ENCODE measurements at regions of chr3 and their contacts with region 1.

Region 1: DNA sequence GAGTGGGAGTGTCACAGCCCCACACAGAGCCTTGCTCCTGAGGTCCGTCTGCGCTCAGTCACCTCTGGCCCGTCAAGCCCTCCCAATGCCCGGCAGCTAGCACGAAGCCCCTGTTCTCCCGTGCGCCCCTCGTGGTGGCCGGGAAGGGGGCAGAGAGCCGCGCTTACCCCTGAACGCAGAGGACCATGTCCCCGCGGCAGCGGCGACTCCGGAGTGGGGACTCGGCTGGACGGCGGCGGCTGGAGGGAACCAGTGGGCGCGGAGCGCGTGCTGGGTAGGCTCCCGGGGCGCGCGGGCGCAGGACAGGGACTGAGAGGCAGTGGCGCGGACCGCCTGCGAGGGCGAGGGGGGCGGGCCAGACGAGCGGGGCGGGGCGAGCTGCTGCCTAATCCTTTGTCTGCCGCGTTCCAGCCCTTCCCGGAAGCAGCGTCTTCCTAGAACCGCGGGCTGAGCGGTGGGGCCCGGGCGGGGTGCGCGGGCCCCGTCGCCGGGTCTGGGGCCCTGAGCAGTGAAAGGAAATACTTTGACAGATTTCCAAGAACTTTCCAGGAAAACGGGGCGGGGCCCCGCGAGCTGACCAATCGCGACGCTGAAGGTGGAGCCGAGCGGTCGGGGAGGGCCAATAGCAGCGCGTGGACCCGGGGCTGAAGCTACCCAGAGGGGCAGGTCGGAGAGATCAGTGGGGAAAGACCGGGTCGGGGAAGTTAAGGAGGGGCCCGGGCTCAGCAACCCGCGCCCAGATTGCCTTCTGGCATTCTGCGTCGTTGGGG is at the start of gene CISH:
- DNase-seq: peak; percentile 80 to 97
- H3K4me3 ChIP-seq: peak within 1 kb of the TSS; percentile 74 to 76
- H3K27ac ChIP-seq: peak within 1 kb of the TSS; percentile 70 to 79
- H3K4me1 ChIP-seq: peaks cover 3 to 18% of the 10 kb centered on the region in 2 donors
- H3K27me3 ChIP-seq: no peaks in the 10 kb centered on the region
- CTCF ChIP-seq: peak in 2 of 3 experiments; percentile 35 to 39
- total RNA-seq, gene CISH: 6.1 TPM

Region 2: DNA sequence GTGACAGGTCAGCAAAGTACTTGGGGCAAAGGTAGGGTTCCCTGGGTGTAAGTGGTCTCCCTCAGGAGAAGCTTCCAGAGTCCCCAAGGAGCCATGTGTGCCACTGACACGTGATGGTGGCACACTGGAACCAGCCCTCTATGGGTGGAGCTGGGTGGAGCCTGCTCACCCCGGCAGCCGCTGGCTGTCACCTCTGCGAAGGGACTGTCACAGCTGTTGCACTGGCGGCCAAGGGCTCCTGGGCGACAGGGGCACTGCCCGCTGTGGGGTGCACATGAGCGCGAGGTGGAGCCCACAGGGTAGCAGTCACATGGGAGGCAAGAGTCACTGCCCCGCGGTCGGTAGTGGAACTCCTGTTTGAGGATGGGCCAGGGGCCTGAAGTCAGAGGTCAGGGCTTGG is 1960.9 kb before region 1 on chr3:
- intact Hi-C with region 1: no loop called
- DNase-seq: no peak
- H3K4me3 ChIP-seq: no peak overlapping the region
- H3K27ac ChIP-seq: no peak overlapping the region
- H3K4me1 ChIP-seq: peaks cover 4 to 5% of the 10 kb centered on the region in 2 donors
- H3K27me3 ChIP-seq: no peaks in the 10 kb centered on the region
- CTCF ChIP-seq: no peak

Region 3: DNA sequence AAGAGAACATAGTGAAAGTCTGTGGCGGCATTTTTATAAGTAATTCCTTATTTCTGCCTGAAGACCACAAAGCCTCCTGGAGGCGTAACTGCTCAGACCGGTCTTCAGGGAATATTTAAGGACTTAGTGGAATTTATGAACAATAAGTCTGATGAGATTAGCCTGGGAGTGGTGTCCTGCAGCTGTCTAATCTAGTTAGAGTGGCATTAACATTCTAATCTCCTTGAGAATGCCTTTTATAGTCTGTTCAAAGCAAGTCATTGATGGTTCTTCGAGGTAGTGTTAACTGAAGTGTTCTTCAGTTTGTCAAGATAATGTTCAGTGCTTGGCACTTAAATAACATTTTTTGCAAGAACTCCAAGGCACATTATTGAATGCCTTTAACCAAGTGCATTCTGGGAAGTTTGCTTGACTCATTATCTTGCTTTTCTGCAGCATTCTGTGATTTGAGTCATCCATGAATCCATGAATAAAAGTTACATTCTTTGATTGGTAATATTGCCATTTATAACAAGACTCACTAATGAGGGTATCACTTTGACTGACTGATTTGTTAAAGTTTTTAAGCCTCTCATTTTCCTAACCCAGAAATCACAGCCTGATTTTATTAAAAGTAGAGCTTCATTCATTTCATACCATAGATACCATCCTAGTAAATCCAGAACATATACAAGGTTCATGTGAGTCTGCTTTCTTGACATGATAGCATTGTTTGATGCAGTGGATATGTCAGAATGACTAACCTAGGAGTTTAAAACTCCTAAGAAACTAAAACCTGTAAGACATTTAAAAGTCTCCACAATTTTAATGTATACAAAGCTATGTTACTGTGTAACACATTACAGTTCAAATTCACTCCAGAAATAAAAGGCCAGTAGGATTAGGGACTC is 510.4 kb before region 1 on chr3:
- intact Hi-C with region 1: no loop called
- DNase-seq: no peak
- H3K4me3 ChIP-seq: no peak overlapping the region
- H3K27ac ChIP-seq: no peak overlapping the region
- H3K4me1 ChIP-seq: no peaks in the 10 kb centered on the region
- H3K27me3 ChIP-seq: no peaks in the 10 kb centered on the region
- CTCF ChIP-seq: no peak

Region 4: DNA sequence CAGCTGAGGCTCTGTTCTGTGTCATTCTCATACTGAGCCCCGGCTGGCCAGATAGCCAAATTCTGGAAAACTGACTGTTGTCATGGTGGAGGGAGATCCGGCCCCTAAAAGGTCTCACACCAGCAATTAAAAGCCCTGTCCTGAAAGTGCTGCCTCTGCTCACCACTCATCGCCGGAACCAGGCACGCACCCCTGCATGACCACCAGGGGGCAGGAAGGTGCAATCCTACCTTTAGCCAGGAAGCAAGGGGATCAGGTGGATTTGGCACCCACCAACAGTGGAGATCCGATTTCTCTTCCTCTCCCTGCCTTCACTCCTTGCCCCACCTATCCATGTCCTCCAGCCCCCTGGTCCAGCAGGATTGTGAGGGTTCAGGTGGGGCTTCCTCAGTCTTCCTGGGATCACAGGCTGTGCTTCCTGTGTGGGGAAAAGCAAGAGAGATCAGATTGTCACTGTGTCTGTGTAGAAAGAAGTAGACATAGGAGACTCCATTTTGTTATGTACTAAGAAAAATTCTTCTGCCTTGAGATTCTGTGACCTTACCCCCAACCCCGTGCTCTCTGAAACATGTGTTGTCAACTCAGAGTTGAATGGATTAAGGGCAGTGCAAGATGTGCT is 92.1 kb before region 1 on chr3:
- intact Hi-C with region 1: loop called (anchors 10 kb)
- DNase-seq: no peak
- H3K4me3 ChIP-seq: no peak overlapping the region
- H3K27ac ChIP-seq: no peak overlapping the region
- H3K4me1 ChIP-seq: peaks cover 0 to 8% of the 10 kb centered on the region in 2 donors
- H3K27me3 ChIP-seq: no peaks in the 10 kb centered on the region
- CTCF ChIP-seq: peak; percentile 47 to 84 (median 70)

Region 5: DNA sequence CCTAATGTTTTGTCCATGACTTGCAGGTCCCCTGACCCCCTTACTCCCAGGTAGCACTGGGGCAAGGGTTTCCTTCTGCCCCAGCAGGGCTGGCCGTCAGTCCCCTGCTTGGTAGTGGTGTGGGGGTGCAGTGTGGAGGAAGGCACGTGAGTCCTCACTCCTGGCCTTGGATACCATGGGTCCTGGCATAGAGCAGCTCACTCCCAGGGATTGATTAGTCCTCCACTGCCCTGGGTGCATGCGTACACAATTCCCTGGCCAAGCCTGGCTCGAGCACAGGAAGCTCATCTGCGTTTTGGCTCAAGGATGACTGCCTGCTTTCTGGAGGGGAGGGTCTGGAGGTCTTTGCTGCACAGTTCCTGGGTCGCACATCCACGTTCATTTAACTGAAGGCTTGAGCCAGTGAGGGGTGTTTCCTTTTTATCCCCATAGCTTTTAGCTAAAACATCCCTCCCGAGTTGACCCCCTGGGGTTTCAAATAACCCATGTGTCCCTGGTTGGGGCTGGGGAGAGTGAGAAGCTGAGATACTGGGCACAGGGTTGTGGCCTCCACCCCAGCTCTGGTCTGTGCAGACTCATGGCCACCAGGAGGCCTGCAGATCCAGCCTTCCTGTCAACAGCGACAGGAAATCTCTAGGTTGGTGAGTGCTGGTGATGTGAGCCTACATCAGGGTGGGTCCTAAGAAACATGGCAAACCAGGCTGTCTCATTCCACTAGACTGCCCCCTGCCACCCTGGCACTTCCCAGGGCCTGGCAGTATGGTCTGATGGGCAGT is 30.8 kb before region 1 on chr3:
- intact Hi-C with region 1: no loop called
- DNase-seq: no peak
- H3K4me3 ChIP-seq: no peak overlapping the region
- H3K27ac ChIP-seq: peak overlapping the region in 1 of 2 donors; percentile 51
- H3K4me1 ChIP-seq: peaks cover 0 to 10% of the 10 kb centered on the region in 2 donors
- H3K27me3 ChIP-seq: no peaks in the 10 kb centered on the region
- CTCF ChIP-seq: no peak

Region 6: DNA sequence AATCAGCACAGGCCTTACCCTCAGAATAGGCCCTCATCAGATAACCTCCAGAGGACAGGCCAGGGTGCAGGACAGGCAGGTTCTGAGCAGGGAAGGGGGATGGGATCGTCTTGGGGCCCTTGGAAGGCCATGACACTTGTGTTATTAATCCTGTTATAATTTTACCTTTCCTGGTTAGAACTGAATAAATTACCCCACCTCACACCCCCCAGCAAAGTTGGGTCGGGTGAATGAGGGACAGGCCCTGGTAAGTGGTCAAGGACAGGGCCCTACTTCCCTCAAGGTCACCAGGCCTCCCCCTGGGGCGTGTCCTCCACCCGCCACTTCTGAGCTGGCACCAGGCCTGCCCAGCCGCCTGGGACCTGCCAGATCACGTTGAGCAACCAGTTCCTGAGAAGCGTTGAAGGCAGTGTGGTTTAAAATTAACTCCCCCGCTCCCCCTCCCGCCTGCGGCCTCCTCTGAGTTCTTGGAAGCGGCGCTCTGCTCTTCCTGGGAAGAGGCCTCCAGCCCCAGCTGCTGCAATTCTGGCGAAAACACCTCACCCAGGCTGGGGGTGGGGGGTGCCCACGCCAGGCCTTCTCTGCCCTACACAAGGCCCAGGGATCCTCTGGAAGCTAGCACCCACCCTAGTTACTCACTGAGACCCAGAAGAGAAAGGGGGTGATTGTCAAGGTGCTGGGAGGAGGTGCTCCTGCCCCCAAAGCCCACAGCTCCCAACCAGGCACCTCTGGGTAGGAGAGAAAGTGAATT is 10.6 kb before region 1 on chr3:
- intact Hi-C with region 1: loop called (anchors 1 kb)
- DNase-seq: peak; percentile 88 to 98
- H3K4me3 ChIP-seq: peak overlapping the region; percentile 21 to 46
- H3K27ac ChIP-seq: peak overlapping the region; percentile 94 to 98
- H3K4me1 ChIP-seq: peaks cover 20 to 29% of the 10 kb centered on the region in 2 donors
- H3K27me3 ChIP-seq: no peaks in the 10 kb centered on the region
- CTCF ChIP-seq: no peak

Region 7: DNA sequence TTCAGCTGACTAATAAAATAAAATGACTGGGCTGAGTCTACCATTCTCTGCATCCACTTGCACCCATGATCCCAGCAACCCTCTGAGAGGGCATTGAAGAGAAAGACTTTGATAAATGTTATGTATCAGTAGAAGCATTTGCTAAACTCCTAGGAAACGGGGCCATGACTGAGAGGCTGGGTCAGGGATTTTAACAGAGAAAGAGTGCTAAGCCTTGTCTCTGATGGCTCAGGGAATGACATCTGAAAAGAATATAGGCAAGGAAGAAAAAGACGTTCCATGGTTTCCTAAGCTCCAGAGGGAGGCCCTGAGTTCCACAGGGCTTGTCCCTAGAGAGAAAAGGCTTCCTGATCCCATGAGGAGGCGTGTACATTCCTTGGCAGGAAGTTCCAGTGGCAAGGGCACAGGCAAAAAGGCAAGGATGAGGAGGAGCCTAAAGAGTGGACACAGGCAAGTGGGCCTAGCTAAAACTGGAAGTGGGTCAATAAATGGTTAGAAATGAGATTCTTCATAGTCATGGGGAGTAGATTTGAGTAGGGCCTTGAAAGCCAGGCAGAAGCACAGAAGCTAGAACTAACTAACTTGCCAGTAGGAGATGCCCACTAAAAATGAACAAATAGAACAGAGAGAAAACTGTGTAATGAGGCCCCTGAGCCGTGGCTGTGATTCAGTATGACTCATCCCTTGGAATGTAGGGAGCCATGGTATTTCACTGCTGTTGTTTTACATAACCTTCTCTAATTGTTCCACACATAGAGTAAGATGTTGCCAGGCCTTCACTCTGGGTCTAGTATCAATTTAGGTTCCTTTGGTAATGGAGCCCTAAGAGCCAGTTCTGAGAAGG is 728.6 kb after region 1 on chr3:
- intact Hi-C with region 1: loop called (anchors 2 kb)
- DNase-seq: peak in 1 of 2 donors; percentile 76
- H3K4me3 ChIP-seq: no peak overlapping the region
- H3K27ac ChIP-seq: peak overlapping the region; percentile 87 to 90
- H3K4me1 ChIP-seq: peaks cover 9 to 22% of the 10 kb centered on the region in 2 donors
- H3K27me3 ChIP-seq: no peaks in the 10 kb centered on the region
- CTCF ChIP-seq: no peak

Region 8: GRCh38 chr3:51384726-51385473 is 773.3 kb after region 1 on chr3 and contains the start of gene MANF:
- intact Hi-C with region 1: loop called (anchors 1 kb)
- DNase-seq: peak; percentile 97 to 99
- H3K4me3 ChIP-seq: peak within 1 kb of the TSS; percentile 92
- H3K27ac ChIP-seq: peak within 1 kb of the TSS; percentile 92 to 98
- H3K4me1 ChIP-seq: peaks cover 5 to 28% of the 10 kb centered on the region in 2 donors
- H3K27me3 ChIP-seq: no peaks in the 10 kb centered on the region
- CTCF ChIP-seq: peak in 1 of 3 experiments; percentile 37
- total RNA-seq, gene MANF: 34.4 TPM

Region 9: DNA sequence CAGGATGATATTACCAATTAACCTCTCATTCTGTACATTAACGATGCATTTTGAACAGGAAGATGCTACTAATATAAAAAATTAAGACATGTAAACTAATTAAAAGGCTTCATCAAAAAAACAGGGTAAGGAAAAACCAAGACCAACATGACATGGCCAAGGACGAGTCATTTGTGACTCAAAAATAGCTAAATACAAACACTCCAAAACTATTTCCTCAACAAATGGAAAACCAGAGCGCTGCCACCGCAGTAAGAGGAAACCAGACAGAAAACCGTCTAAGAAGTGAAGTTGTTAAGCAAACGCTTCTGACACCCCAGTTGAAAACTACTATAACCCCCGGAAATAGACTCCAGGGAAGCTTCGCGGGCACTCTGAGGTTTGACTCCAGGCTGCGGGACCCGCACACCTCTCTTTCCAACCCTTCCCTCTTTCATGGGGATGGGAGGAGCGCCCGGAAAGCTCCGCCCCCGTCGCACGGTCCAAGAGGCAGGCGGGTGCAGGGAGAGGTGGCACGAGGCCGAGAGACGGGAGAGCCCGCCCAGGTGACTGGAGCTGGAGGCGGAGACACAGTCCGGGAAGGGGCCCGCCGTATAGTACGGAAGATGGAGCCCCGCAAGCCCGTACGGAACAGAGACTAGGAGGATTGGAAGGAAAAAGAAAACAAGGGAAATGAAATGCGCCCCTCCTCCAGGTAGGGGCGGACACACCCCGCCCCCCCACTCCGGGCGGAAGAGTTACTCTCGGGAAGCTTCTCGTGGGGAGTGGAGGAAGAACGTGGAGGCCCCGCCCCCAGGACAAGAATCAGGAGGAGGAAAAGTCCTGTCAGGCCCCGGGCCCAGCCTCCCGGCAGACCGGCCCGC is 887.5 kb after region 1 on chr3:
- intact Hi-C with region 1: loop called (anchors 2 kb)
- DNase-seq: peak; percentile 86 to 98
- H3K4me3 ChIP-seq: peak overlapping the region; percentile 88 to 95
- H3K27ac ChIP-seq: peak overlapping the region; percentile 98 to 99
- H3K4me1 ChIP-seq: peaks cover 0 to 3% of the 10 kb centered on the region in 2 donors
- H3K27me3 ChIP-seq: no peaks in the 10 kb centered on the region
- CTCF ChIP-seq: no peak

Measured in ascending aorta (tissue), 2 donors.